Caco-2 (cell line): ENCODE measurements at regions of chr10 and their contacts with region 1.

Region 1: GRCh38 chr10:121608469-121609190 is 10.4 kb upstream of the FGFR2 start:
- DNase-seq: peak; percentile 59 to 74
- H3K4me3 ChIP-seq: no peak overlapping the region
- H3K4me3 Mint-ChIP-seq: peak overlapping the region; percentile 55
- H3K27ac Mint-ChIP-seq: peak overlapping the region; percentile 96
- H3K4me1 ChIP-seq: peaks cover 63% of the 10 kb centered on the region
- H3K4me1 Mint-ChIP-seq: peaks cover 57% of the 10 kb centered on the region
- H3K27me3 ChIP-seq: no peaks in the 10 kb centered on the region
- H3K27me3 Mint-ChIP-seq: no peaks in the 10 kb centered on the region
- CTCF ChIP-seq: peak; percentile 46 to 91

Region 2: GRCh38 chr10:120979435-120980278 is 629.0 kb before region 1 on chr10:
- CTCF ChIA-PET with region 1: no interaction called
- POLR2A ChIA-PET with region 1: no interaction called
- intact Hi-C with region 1: loop called (anchors 5 kb)
- DNase-seq: peak; percentile 94 to 97
- H3K4me3 ChIP-seq: peak overlapping the region; percentile 83
- H3K4me3 Mint-ChIP-seq: peak overlapping the region; percentile 82
- H3K27ac Mint-ChIP-seq: peak overlapping the region; percentile 93
- H3K4me1 ChIP-seq: peaks cover 60% of the 10 kb centered on the region
- H3K4me1 Mint-ChIP-seq: peaks cover 57% of the 10 kb centered on the region
- H3K27me3 ChIP-seq: no peaks in the 10 kb centered on the region
- H3K27me3 Mint-ChIP-seq: no peaks in the 10 kb centered on the region
- CTCF ChIP-seq: no peak

Region 3: GRCh38 chr10:121368347-121369025 is 240.1 kb before region 1 on chr10:
- CTCF ChIA-PET with region 1: no interaction called
- POLR2A ChIA-PET with region 1: no interaction called
- intact Hi-C with region 1: loop called (anchors 2 kb)
- DNase-seq: peak; percentile 81 to 83
- H3K4me3 ChIP-seq: peak overlapping the region; percentile 7; the same call in 1 of the 2 replicates
- H3K4me3 Mint-ChIP-seq: peak overlapping the region; percentile 71
- H3K27ac Mint-ChIP-seq: peak overlapping the region; percentile 87
- H3K4me1 ChIP-seq: peaks cover 49% of the 10 kb centered on the region
- H3K4me1 Mint-ChIP-seq: peaks cover 43% of the 10 kb centered on the region
- H3K27me3 ChIP-seq: no peaks in the 10 kb centered on the region
- H3K27me3 Mint-ChIP-seq: no peaks in the 10 kb centered on the region
- CTCF ChIP-seq: peak in 1 of 2 experiments; percentile 22

Region 4: DNA sequence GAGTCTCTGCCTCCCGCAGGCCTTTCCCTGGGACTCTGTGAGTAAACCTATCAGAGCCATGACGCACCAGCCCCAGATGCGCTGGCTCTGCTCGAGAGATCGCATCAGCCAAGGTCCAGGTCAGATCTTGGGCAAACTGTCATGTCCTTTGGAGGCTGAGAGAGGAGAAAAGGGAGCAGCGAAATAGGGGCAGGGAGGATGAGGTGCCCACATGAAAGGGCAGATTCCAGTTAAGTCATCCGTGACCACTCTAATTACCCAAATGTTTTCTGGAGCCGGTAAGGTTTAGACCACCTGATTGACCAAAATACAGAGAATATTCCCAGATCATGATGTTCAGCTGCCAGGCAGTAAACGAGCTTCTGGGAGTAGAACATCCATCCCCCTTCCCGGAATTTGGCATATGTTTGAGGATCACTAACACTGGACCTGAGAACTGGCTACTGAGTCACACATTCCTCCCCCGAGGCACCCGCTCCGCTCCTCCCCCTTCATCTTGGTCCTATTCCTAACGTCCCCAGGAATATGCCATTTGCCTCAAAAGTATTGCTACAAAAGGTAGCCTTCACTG is 98.3 kb before region 1 on chr10:
- CTCF ChIA-PET with region 1: no interaction called
- POLR2A ChIA-PET with region 1: no interaction called
- intact Hi-C with region 1: loop called (anchors 1 kb)
- DNase-seq: no peak
- H3K4me3 ChIP-seq: no peak overlapping the region
- H3K4me3 Mint-ChIP-seq: peak overlapping the region; percentile 24
- H3K27ac Mint-ChIP-seq: peak overlapping the region; percentile 52
- H3K4me1 ChIP-seq: peaks cover 69% of the 10 kb centered on the region
- H3K4me1 Mint-ChIP-seq: peaks cover 51% of the 10 kb centered on the region
- H3K27me3 ChIP-seq: no peaks in the 10 kb centered on the region
- H3K27me3 Mint-ChIP-seq: no peaks in the 10 kb centered on the region
- CTCF ChIP-seq: no peak

Region 5: DNA sequence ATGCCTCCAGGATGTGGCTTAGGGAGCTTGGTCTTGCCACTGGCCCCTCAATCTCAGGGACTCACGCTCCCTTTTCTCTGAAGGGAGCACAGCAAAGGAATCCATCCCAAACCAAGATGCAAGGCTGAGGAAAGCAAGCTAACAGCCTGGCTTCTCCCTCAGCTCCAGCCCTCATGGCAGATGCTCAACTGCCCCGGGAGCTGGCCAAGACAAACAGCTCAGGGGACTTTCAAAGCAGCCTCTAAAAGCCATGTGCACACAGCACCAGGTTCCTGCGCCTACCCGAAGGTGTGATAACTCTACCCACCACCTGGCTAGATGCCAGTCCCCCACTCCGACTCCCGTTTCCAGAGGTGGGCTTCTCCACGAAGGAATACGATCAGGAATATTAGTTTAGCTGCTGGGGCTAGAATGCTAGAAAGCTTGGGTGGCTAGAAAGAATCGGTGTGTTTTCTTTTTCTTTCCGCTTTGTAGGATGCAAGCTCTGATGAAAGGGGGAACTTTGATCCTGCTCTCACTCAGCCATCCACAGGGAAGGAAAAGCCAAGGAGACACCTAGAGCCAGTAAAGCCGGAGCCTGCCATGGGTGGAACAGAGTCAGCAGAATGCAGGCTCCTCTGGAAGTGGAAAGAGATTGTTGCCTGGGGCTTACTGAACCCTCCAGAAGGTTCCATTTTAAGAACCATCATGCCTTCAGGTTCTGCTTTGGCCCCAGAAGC is 78.6 kb after region 1 on chr10:
- CTCF ChIA-PET with region 1: interaction called, 3 read pairs
- POLR2A ChIA-PET with region 1: no interaction called
- intact Hi-C with region 1: loop called (anchors 1 kb)
- DNase-seq: no peak
- H3K4me3 ChIP-seq: no peak overlapping the region
- H3K4me3 Mint-ChIP-seq: no peak overlapping the region
- H3K27ac Mint-ChIP-seq: no peak overlapping the region
- H3K4me1 ChIP-seq: peaks cover 41% of the 10 kb centered on the region
- H3K4me1 Mint-ChIP-seq: peaks cover 32% of the 10 kb centered on the region
- H3K27me3 ChIP-seq: no peaks in the 10 kb centered on the region
- H3K27me3 Mint-ChIP-seq: no peaks in the 10 kb centered on the region
- CTCF ChIP-seq: no peak

Region 6: GRCh38 chr10:121702351-121703320 is 94.0 kb after region 1 on chr10:
- CTCF ChIA-PET with region 1: no interaction called
- POLR2A ChIA-PET with region 1: no interaction called
- intact Hi-C with region 1: no loop called
- DNase-seq: no peak
- H3K4me3 ChIP-seq: no peak overlapping the region
- H3K4me3 Mint-ChIP-seq: no peak overlapping the region
- H3K27ac Mint-ChIP-seq: no peak overlapping the region
- H3K4me1 ChIP-seq: no peaks in the 10 kb centered on the region
- H3K4me1 Mint-ChIP-seq: peaks cover 9% of the 10 kb centered on the region
- H3K27me3 ChIP-seq: no peaks in the 10 kb centered on the region
- H3K27me3 Mint-ChIP-seq: no peaks in the 10 kb centered on the region
- CTCF ChIP-seq: no peak

Region 7: GRCh38 chr10:121734589-121735045 is 126.0 kb after region 1 on chr10:
- CTCF ChIA-PET with region 1: interaction called, 3 read pairs
- POLR2A ChIA-PET with region 1: no interaction called
- intact Hi-C with region 1: loop called (anchors 1 kb)
- DNase-seq: peak in 1 of 2 experiments; percentile 57
- H3K4me3 ChIP-seq: peak overlapping the region; percentile 34
- H3K4me3 Mint-ChIP-seq: peak overlapping the region; percentile 76
- H3K27ac Mint-ChIP-seq: peak overlapping the region; percentile 52
- H3K4me1 ChIP-seq: peaks cover 3% of the 10 kb centered on the region; the same call in 1 of the 2 replicates
- H3K4me1 Mint-ChIP-seq: peaks cover 36% of the 10 kb centered on the region
- H3K27me3 ChIP-seq: no peaks in the 10 kb centered on the region
- H3K27me3 Mint-ChIP-seq: no peaks in the 10 kb centered on the region
- CTCF ChIP-seq: peak; percentile 68 to 82

Region 8: GRCh38 chr10:122298598-122299301 is 690.1 kb after region 1 on chr10:
- CTCF ChIA-PET with region 1: no interaction called
- POLR2A ChIA-PET with region 1: no interaction called
- intact Hi-C with region 1: no loop called
- DNase-seq: peak; percentile 70 to 75
- H3K4me3 ChIP-seq: 0 out of 2 replicates have a peak overlapping the region, but pooled peaks have one; percentile 18
- H3K4me3 Mint-ChIP-seq: no peak overlapping the region
- H3K27ac Mint-ChIP-seq: no peak overlapping the region
- H3K4me1 ChIP-seq: peaks cover 15% of the 10 kb centered on the region
- H3K4me1 Mint-ChIP-seq: peaks cover 11% of the 10 kb centered on the region
- H3K27me3 ChIP-seq: no peaks in the 10 kb centered on the region
- H3K27me3 Mint-ChIP-seq: no peaks in the 10 kb centered on the region
- CTCF ChIP-seq: peak; percentile 92 to 96